ENCODE measurements at regions of chr13 and their contacts with region 1.

Region 1: GRCh38 chr13:23991119-23991518 is 93.8 kb upstream of the C1QTNF9B start:
- DNase-seq: peak in 1 of 2 experiments; percentile 52
- H3K4me3 ChIP-seq: no peak overlapping the region
- H3K4me3 Mint-ChIP-seq: peak overlapping the region; percentile 18
- H3K27ac Mint-ChIP-seq: peak overlapping the region; percentile 37
- H3K4me1 ChIP-seq: peaks cover 37% of the 10 kb centered on the region
- H3K4me1 Mint-ChIP-seq: peaks cover 20% of the 10 kb centered on the region
- H3K27me3 ChIP-seq: no peaks in the 10 kb centered on the region
- H3K27me3 Mint-ChIP-seq: no peaks in the 10 kb centered on the region
- CTCF ChIP-seq: no peak

Region 2: GRCh38 chr13:23969647-23970046 is 21.5 kb before region 1 on chr13:
- CTCF ChIA-PET with region 1: no interaction called
- POLR2A ChIA-PET with region 1: no interaction called
- intact Hi-C with region 1: loop called (anchors 1 kb)
- DNase-seq: peak; percentile 89 to 92
- H3K4me3 ChIP-seq: no peak overlapping the region
- H3K4me3 Mint-ChIP-seq: peak overlapping the region; percentile 46
- H3K27ac Mint-ChIP-seq: peak overlapping the region; percentile 69
- H3K4me1 ChIP-seq: peaks cover 31% of the 10 kb centered on the region
- H3K4me1 Mint-ChIP-seq: peaks cover 24% of the 10 kb centered on the region
- H3K27me3 ChIP-seq: no peaks in the 10 kb centered on the region
- H3K27me3 Mint-ChIP-seq: no peaks in the 10 kb centered on the region
- CTCF ChIP-seq: no peak

Region 3: DNA sequence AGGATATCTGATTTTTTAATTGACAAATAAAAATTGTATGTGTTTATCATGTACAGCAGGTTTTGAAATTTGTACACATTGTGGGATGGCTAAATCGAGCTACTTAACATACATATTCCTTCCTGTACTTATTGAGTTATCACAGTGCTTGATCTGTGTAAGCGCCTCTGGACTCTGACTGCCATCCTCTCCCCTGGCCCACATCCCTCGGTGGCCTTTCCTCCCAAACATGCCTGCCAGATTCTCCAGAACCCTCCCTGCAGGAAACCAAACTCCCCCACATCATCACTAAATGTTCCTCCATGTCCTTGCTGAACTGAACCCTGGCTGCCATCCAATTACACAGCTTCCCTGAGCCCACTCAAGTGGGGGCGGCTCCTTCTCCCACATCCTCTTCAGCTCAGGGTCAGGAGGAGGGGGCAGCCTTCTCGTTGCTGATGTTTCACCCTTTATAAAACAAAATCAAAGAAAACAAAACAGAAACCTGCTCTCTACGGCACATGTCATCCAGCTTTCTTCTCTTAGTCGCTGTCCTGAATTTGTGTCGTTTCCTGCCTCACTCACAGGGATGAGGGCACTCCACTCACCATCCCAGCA is 72.3 kb after region 1 on chr13:
- CTCF ChIA-PET with region 1: no interaction called
- POLR2A ChIA-PET with region 1: no interaction called
- intact Hi-C with region 1: no loop called
- DNase-seq: no peak
- H3K4me3 ChIP-seq: no peak overlapping the region
- H3K4me3 Mint-ChIP-seq: no peak overlapping the region
- H3K27ac Mint-ChIP-seq: no peak overlapping the region
- H3K4me1 ChIP-seq: no peaks in the 10 kb centered on the region
- H3K4me1 Mint-ChIP-seq: no peaks in the 10 kb centered on the region
- H3K27me3 ChIP-seq: no peaks in the 10 kb centered on the region
- H3K27me3 Mint-ChIP-seq: no peaks in the 10 kb centered on the region
- CTCF ChIP-seq: no peak

Region 4: DNA sequence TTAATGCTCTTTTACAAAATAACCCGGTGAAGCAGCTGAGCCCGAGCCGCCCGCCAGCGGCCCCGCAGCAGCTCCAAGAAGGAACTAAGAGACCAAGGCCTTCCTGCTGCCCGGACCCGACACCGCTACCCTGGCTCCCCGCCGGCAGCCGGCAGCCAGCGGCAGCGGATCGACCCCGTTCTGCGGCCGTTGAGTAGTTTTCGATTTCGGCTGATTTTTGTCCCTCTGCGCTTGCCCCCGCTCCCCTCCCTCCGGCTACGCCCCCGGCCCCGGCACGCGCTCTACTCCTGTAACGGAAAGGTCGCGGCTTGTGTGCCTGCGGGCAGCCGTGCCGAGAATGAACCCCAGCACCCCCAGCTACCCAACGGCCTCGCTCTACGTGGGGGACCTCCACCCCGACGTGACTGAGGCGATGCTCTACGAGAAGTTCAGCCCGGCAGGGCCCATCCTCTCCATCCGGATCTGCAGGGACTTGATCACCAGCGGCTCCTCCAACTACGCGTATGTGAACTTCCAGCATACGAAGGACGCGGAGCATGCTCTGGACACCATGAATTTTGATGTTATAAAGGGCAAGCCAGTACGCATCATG is 1104.8 kb after region 1 on chr13 and contains the start of gene PABPC3:
- CTCF ChIA-PET with region 1: no interaction called
- POLR2A ChIA-PET with region 1: no interaction called
- intact Hi-C with region 1: no loop called
- DNase-seq: no peak
- H3K4me3 ChIP-seq: no peak within 1 kb of the TSS
- H3K4me3 Mint-ChIP-seq: no peak within 1 kb of the TSS
- H3K27ac Mint-ChIP-seq: no peak within 1 kb of the TSS
- H3K4me1 ChIP-seq: no peaks in the 10 kb centered on the region
- H3K4me1 Mint-ChIP-seq: no peaks in the 10 kb centered on the region
- H3K27me3 ChIP-seq: no peaks in the 10 kb centered on the region
- H3K27me3 Mint-ChIP-seq: peaks cover 24% of the 10 kb centered on the region
- CTCF ChIP-seq: no peak
- total RNA-seq, gene PABPC3: 0.23 and 0.59 TPM in 2 replicates